Activated B cell treated with CpG ODN at 0.5 μM for 24 hours (primary cell): ENCODE measurements at regions of chr2 and their contacts with region 1.

Region 1: GRCh38 chr2:232854082-232854481 is 16.0 kb upstream of the SNORC start:
- DNase-seq: no peak
- ATAC-seq: no peak
- H3K4me3 Mint-ChIP-seq: no peak overlapping the region
- H3K27ac Mint-ChIP-seq: no peak overlapping the region
- H3K4me1 Mint-ChIP-seq: no peaks in the 10 kb centered on the region
- H3K27me3 Mint-ChIP-seq: no peaks in the 10 kb centered on the region
- CTCF ChIP-seq: no peak

Region 2: DNA sequence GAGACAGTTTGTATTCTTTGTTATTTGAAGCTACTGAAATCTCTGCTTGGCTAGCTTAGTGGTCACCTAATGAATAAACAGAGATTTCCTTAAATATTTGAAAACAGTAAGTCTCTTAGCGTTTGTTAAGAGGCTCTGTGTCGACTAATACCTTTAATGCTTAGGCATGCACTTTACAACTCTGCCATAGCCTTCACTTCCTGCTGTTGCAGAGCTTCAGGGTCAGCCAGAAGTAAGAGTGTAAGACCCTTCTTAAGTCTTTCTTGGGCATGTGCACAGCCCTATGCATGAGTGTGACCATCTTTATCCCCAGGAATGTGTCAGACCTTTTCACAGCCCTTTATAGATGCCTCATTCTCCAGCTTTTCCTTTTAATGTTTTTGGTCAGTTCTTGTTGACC is 670.8 kb before region 1 on chr2:
- CTCF ChIA-PET with region 1: no interaction called
- POLR2A ChIA-PET with region 1: no interaction called
- intact Hi-C with region 1: no loop called
- DNase-seq: no peak
- ATAC-seq: no peak
- H3K4me3 Mint-ChIP-seq: no peak overlapping the region
- H3K27ac Mint-ChIP-seq: no peak overlapping the region
- H3K4me1 Mint-ChIP-seq: no peaks in the 10 kb centered on the region
- H3K27me3 Mint-ChIP-seq: no peaks in the 10 kb centered on the region
- CTCF ChIP-seq: no peak

Region 3: DNA sequence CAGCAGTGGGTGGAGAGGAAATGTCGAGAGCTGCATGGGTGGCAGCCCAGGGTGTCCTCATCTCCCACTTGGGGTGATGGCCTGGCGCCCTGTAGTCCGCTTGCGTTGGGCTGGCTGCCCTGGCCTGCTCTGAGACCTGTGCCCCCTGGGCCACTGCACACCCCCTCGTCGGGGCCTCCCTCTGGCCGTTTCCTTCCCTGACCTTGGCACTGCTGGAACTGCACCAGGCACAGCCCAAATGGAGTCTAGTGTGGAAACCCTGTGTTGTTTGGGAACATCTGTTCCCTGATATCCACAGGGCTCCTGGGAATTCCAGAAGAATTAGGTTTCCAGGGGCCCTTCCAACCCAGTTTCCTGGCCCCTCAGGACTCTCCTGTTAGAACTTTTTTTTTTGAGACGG is 206.8 kb before region 1 on chr2:
- CTCF ChIA-PET with region 1: no interaction called
- POLR2A ChIA-PET with region 1: no interaction called
- intact Hi-C with region 1: no loop called
- DNase-seq: no peak
- ATAC-seq: no peak
- H3K4me3 Mint-ChIP-seq: no peak overlapping the region
- H3K27ac Mint-ChIP-seq: no peak overlapping the region
- H3K4me1 Mint-ChIP-seq: no peaks in the 10 kb centered on the region
- H3K27me3 Mint-ChIP-seq: peaks cover 12% of the 10 kb centered on the region
- CTCF ChIP-seq: no peak

Region 4: GRCh38 chr2:232761301-232761907 is 92.7 kb before region 1 on chr2:
- CTCF ChIA-PET with region 1: no interaction called
- POLR2A ChIA-PET with region 1: no interaction called
- intact Hi-C with region 1: loop called (anchors 5 kb)
- DNase-seq: no peak
- ATAC-seq: peak; percentile 54
- H3K4me3 Mint-ChIP-seq: no peak overlapping the region
- H3K27ac Mint-ChIP-seq: no peak overlapping the region
- H3K4me1 Mint-ChIP-seq: no peaks in the 10 kb centered on the region
- H3K27me3 Mint-ChIP-seq: no peaks in the 10 kb centered on the region
- CTCF ChIP-seq: no peak

Region 5: GRCh38 chr2:232927032-232927792 is 73.1 kb after region 1 on chr2:
- CTCF ChIA-PET with region 1: no interaction called
- POLR2A ChIA-PET with region 1: no interaction called
- intact Hi-C with region 1: no loop called
- DNase-seq: no peak
- ATAC-seq: no peak
- H3K4me3 Mint-ChIP-seq: peak overlapping the region; percentile 61
- H3K27ac Mint-ChIP-seq: no peak overlapping the region
- H3K4me1 Mint-ChIP-seq: peaks cover 11% of the 10 kb centered on the region
- H3K27me3 Mint-ChIP-seq: peaks cover 50% of the 10 kb centered on the region
- CTCF ChIP-seq: no peak

Region 6: GRCh38 chr2:233029321-233029720 is 175.2 kb after region 1 on chr2:
- CTCF ChIA-PET with region 1: interaction called, 5 read pairs
- POLR2A ChIA-PET with region 1: no interaction called
- intact Hi-C with region 1: loop called (anchors 1 kb)
- DNase-seq: no peak
- ATAC-seq: no peak
- H3K4me3 Mint-ChIP-seq: no peak overlapping the region
- H3K27ac Mint-ChIP-seq: no peak overlapping the region
- H3K4me1 Mint-ChIP-seq: no peaks in the 10 kb centered on the region
- H3K27me3 Mint-ChIP-seq: no peaks in the 10 kb centered on the region
- CTCF ChIP-seq: no peak

Region 7: DNA sequence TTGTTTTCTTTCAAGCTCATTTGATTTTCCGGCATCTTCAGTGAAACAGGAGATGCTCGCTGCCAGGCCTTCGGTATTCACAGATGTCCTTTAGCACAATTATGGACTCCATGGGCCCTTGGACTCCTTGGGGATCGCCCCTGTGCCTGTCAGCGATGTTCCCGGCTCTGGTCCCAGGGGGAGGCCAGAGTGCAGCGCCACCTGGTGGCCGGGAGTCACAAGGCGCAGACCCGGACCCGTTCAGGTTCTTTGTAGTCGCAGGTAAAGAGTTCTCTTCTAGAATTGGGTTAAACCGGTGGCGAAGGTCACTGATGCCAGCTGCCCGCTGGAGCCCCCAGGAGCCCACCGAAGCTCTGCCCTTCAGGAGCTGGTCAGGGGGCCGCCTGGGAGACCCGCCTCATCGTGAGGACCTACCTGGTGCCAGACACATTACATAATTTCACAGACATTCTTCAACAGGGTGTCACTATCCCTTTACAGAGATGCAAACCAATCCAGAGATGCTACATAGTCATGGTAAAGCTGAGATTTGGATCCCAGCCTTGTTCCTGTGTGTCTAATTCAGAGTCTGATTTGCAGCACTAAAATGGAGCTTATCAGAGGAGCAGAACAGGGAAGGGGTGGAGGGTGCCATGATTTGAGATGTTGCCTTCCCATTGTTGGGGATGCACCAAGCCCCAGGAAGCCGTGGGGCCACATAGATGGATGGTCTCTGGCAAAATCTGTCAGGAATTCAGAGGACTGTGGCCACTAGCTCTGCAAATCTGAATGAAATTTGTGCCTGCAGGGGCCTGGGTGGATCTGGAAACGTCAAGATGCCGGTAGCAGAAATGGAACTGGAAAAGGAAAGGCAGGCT is 200.1 kb after region 1 on chr2:
- CTCF ChIA-PET with region 1: interaction called, 18 read pairs
- POLR2A ChIA-PET with region 1: no interaction called
- intact Hi-C with region 1: loop called (anchors 1 kb)
- DNase-seq: peak; percentile 72
- ATAC-seq: peak; percentile 74
- H3K4me3 Mint-ChIP-seq: no peak overlapping the region
- H3K27ac Mint-ChIP-seq: peak overlapping the region; percentile 32
- H3K4me1 Mint-ChIP-seq: peaks cover 16% of the 10 kb centered on the region
- H3K27me3 Mint-ChIP-seq: peaks cover 3% of the 10 kb centered on the region
- CTCF ChIP-seq: peak; percentile 65

Region 8: DNA sequence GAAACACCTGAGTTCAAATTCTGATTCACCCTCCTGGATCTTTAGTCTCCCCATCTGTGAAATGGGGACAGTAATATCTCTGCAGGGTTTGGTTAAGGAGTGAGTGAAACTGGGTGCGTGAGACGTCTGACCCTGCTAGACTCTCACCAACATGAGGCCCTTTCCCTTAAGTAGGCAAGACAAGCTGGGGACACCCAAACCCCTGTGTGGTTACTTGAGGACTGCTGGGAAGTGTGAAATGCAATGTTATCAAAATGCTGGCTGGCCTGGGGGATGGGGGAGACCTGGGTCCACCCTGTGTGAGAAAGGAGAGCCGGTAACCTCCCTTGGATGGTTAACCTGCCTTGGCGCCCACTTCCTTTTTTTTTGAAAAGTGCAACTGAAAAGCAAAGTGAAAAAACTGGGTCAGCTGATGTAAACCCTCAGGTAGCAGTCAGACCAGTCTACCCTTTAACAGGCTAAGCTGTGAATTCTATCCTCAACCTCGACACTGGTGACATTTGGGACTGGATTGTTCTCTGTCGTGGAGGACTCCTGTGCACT is 288.3 kb after region 1 on chr2:
- CTCF ChIA-PET with region 1: interaction called, 4 read pairs
- POLR2A ChIA-PET with region 1: no interaction called
- intact Hi-C with region 1: loop called (anchors 2 kb)
- DNase-seq: peak; percentile 30
- ATAC-seq: peak; percentile 83
- H3K4me3 Mint-ChIP-seq: no peak overlapping the region
- H3K27ac Mint-ChIP-seq: peak overlapping the region; percentile 78
- H3K4me1 Mint-ChIP-seq: peaks cover 30% of the 10 kb centered on the region
- H3K27me3 Mint-ChIP-seq: no peaks in the 10 kb centered on the region
- CTCF ChIP-seq: no peak

Region 9: DNA sequence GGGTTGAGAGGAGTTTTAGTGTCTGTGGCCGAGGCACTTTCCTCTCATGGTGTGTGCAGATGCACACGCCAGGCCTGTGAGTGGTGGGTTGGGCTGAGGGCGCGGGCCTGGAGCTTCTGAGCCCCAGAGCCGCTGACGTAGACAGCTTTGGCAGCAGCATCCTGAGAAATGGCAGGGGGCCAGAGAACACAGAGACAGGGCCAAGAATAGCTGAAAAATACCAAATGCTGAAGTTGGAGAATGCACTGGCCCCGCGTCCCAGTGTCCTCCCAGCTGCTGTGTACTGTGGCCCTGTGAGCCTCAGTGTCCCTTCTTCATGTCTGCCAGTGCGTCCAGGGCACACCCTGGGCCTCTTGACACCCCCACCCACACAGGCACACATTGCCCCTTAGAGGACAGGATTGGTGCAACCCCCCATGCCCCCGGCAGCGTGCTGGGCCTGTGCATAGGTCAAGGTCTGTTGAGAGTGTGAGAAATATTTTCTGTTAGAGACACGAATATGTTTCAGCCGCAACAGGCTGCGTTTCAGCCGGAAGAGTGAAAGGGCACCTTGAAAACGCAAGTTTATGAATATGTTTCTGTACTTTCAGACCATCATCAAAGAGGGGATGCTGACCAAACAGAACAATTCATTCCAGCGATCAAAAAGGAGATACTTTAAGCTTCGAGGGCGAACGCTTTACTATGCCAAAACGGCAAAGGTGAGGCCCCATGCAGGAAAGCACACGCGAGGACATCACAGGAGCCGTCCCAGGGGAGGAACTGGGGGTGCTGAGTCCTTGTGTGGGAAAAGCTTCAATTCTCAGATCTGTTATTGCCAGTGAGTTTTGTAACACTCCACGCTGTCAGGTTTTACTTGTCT is 533.8 kb after region 1 on chr2:
- CTCF ChIA-PET with region 1: no interaction called
- POLR2A ChIA-PET with region 1: no interaction called
- intact Hi-C with region 1: loop called (anchors 10 kb)
- DNase-seq: no peak
- ATAC-seq: no peak
- H3K4me3 Mint-ChIP-seq: no peak overlapping the region
- H3K27ac Mint-ChIP-seq: peak overlapping the region; percentile 95
- H3K4me1 Mint-ChIP-seq: peaks cover 63% of the 10 kb centered on the region
- H3K27me3 Mint-ChIP-seq: no peaks in the 10 kb centered on the region
- CTCF ChIP-seq: no peak